Dendritic cell treated with granulocyte-macrophage colony-stimulating factor and Interleukin-4, amounts not matched to agents 40 ng/mL and 50 ng/mL, for 4 days (primary cell): ENCODE measurements at regions of chr16 and their contacts with region 1.

Region 1: DNA sequence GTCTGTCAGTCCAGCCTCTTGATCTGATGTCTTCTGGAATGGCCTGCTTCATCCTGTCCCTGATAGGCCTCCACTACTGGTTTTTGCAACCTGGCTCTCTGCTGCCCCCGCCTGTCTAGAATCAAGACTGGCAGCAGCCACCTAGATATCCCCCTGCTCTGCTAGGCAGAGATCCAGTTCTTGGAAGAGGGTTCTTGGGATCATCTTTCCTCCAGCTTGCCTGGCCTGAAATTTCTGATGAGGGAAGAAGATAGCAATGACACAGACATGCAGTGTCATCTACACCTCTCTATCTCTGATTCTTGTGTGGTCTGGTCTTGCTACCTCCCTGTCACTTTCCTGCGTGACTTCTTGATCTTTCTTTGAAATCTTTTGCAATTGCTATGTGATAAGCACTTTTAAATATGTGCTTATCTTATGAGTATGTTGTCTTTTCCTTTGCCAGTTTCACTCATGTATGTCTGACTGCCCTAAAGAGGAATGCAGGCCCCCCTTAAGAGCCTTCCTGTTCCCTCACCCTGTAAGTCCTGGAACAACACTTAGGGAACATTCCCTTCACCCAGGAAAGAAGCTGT is 20.3 kb upstream of the NFATC3 start:
- H3K4me3 Mint-ChIP-seq: no peak overlapping the region
- H3K27ac Mint-ChIP-seq: peak overlapping the region; percentile 59
- H3K4me1 Mint-ChIP-seq: peaks cover 40% of the 10 kb centered on the region
- H3K27me3 Mint-ChIP-seq: no peaks in the 10 kb centered on the region

Region 2: DNA sequence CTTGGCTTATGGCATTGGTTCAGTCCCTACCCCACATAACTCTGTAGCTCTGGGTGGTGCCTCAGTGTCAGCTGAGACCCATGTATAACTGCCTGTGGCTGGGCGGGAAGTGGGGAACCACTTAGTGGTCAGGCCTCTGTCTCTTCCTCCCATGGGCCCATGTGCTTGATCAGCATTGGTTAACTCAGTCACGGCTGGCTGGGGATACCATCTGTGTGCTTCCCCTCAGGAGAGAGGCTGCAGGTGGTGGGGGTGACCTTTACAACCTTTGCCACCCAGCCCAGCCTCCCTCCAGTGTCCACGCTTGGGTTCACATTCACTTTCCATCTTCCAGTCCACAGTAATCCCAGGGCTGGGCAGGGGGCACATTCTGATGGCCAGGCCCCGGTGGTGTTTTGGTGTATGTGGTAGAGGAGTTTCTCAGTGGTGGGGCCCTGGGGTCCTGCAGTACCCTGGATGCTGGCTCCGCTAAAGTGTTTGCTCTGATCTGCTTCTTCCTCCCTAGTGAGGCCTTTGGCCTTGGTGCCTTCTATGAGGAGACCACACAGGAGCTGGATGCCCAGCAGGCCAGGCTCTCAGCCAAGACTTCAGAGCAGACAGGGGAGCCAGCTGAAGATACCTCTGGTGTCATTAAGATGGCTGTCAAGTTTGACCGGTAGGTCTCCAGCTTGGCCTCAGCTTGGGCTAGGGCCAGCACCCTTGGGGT is 10.1 kb after region 1 on chr16:
- intact Hi-C with region 1: no loop called
- H3K4me3 Mint-ChIP-seq: no peak overlapping the region
- H3K27ac Mint-ChIP-seq: peak overlapping the region; percentile 46
- H3K4me1 Mint-ChIP-seq: peaks cover 78% of the 10 kb centered on the region
- H3K27me3 Mint-ChIP-seq: no peaks in the 10 kb centered on the region

Region 3: GRCh38 chr16:68229431-68230198 is 164.7 kb after region 1 on chr16:
- intact Hi-C with region 1: loop called (anchors 10 kb)
- H3K4me3 Mint-ChIP-seq: no peak overlapping the region
- H3K27ac Mint-ChIP-seq: no peak overlapping the region
- H3K4me1 Mint-ChIP-seq: peaks cover 27% of the 10 kb centered on the region
- H3K27me3 Mint-ChIP-seq: peaks cover 4% of the 10 kb centered on the region